ENCODE measurements at regions of chr18 and their contacts with region 1.

Region 1: GRCh38 chr18:22703883-22704585 is 229.1 kb upstream of the RBBP8 start:
- DNase-seq: no peak

Region 2: GRCh38 chr18:21897811-21898210 is 806.2 kb before region 1 on chr18:
- intact Hi-C with region 1: loop called (anchors 10 kb)
- DNase-seq: no peak

Region 3: GRCh38 chr18:22005191-22005841 is 698.7 kb before region 1 on chr18:
- intact Hi-C with region 1: loop called (anchors 10 kb)
- DNase-seq: no peak

Region 4: DNA sequence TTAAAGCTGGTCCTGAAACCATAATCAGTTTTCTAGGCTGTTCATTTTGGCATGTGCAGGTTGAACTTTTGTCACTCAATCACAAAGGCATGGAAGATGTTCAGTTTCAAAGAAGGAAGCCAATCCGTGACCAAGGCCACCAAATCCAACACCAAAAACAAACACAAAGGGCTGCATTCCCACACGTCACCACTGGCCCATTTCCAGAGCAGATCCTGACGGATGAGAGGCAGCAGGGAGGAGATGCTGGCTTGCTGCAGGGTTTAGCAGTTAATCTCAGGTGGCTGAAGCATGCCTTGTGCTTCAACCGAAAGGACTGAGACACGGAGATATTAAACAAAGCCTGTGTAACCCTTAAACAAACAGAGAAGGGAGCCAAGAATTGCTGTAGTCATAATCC is 94.4 kb before region 1 on chr18:
- intact Hi-C with region 1: loop called (anchors 5 kb)
- DNase-seq: peak; percentile 81

Region 5: GRCh38 chr18:22796069-22796468 is 92.0 kb after region 1 on chr18:
- intact Hi-C with region 1: loop called (anchors 5 kb)
- DNase-seq: no peak